Right ventricle myocardium inferior (tissue), 1 donor: ENCODE measurements at regions of chr14 and their contacts with region 1.

Region 1: GRCh38 chr14:32724867-32725471 is 213.7 kb upstream of the NPAS3 start:
- DNase-seq: no peak
- ATAC-seq: no peak

Region 2: DNA sequence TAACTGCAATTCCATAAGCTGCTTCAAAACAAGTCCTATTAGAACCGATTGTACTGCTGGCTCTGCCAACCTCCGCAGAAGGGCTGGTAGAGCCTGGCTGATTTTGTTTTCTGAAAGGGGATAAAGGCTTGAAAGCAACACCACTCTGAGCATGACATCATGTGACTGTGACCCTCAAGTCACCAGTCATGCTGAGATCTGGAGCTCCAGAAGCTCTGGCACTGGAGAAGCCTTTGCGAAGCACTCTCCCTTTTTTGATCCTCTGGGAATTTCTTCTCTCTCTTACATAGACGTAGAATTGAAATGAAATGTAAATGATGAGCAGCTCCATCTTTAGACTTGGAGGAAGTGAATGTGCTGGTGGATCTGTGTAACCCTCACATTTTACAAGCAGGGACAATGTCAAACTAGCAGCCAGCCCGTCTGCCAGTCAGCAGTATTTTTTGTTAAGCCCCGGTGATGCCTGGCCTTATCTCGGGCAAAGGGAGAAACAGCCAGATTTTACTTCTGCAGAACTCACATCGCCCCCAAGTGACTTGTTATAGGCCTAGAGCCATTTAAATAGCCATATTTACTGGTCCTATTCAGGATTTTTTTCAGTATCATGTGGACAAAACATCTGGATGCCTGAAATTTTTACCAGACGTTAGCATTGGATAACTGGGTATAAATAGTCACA is 101.6 kb after region 1 on chr14:
- intact Hi-C with region 1: loop called (anchors 10 kb)
- DNase-seq: no peak
- ATAC-seq: peak; percentile 68